ENCODE measurements at regions of chr11 and their contacts with region 1.

Region 1: DNA sequence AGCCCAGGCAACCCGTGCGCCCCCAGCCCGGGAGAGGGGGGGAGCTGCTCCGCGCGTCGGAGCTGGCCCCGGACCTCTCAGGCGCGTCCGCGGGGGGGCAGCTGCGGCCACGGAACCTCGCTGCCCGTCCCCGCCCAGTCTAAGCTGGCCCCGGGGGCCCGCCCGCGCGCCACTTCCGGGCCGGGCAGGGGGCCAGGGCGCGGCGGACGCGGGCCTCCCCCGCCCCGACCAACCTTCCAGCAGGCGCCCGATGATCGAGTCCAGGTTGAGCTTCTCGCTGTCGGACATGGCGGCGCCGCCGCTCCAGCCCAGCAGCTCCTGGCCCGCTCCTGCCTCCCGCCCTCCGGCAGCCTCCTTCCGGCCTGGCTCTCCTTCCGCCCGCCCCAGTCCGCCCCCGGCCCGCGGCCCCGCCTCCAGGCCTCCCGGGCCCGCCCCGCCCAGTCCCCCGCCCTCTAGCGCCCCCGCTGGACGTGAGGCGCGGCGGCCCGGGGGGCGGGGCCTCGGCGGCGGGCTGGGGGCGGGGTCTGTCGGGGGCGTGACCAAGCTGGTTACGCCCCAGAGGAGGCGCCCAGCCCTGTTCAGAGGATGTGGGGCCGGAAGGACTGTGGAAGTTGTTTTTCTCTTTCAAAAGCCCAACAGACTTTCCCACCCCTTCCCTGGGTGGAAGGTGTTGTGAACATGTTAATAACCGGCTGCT is at the start of gene PPP1CA:
- DNase-seq: peak; percentile 64 to 93
- H3K4me3 ChIP-seq: peak within 1 kb of the TSS; percentile 44 to 98 (median 73)
- H3K27ac ChIP-seq: peak within 1 kb of the TSS; percentile 79; the same call in 1 of the 2 replicates
- H3K4me1 ChIP-seq: peaks cover 0 to 8% (median 4%) of the 10 kb centered on the region in 4 experiments; a peak in 5 of 7 replicates
- H3K27me3 ChIP-seq: no peaks in the 10 kb centered on the region
- CTCF ChIP-seq: peak in 1 of 3 experiments; percentile 37; a peak in 1 of 4 replicates
- EP300 ChIP-seq: no peak
- POLR2A ChIP-seq: peak in 1 of 2 experiments; percentile 72; a peak in 1 of 3 replicates
- RAD21 ChIP-seq: 0 out of 4 replicates have a peak, but pooled peaks of 1 of the 2 experiments have one; percentile 0
- total RNA-seq, gene PPP1CA: 198 and 210 TPM in 2 replicates

Region 2: DNA sequence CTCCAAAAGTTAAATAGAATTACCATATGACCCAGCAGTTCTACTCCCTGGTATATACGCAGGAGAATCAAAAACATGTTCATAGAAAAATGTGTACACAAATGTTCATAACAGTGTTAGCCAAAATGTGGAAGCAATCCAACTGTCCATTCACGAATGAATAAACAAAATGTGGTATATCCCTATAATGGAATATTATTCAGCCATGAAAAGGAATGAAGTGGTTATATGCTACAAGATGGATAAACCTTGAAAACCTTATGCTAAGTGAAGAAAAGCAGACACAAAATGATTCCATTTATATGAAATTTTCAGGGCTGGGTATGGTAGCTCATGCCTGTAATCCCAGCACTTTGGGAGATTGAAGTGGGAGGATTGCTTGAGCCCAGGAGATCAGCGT is 64.4 kb before region 1 on chr11:
- CTCF ChIA-PET with region 1: no interaction called
- POLR2A ChIA-PET with region 1: no interaction called
- DNase-seq: no peak
- H3K4me3 ChIP-seq: no peak overlapping the region
- H3K27ac ChIP-seq: no peak overlapping the region
- H3K4me1 ChIP-seq: no peaks in the 10 kb centered on the region
- H3K27me3 ChIP-seq: no peaks in the 10 kb centered on the region
- CTCF ChIP-seq: no peak
- EP300 ChIP-seq: no peak
- POLR2A ChIP-seq: no peak
- RAD21 ChIP-seq: no peak

Region 3: DNA sequence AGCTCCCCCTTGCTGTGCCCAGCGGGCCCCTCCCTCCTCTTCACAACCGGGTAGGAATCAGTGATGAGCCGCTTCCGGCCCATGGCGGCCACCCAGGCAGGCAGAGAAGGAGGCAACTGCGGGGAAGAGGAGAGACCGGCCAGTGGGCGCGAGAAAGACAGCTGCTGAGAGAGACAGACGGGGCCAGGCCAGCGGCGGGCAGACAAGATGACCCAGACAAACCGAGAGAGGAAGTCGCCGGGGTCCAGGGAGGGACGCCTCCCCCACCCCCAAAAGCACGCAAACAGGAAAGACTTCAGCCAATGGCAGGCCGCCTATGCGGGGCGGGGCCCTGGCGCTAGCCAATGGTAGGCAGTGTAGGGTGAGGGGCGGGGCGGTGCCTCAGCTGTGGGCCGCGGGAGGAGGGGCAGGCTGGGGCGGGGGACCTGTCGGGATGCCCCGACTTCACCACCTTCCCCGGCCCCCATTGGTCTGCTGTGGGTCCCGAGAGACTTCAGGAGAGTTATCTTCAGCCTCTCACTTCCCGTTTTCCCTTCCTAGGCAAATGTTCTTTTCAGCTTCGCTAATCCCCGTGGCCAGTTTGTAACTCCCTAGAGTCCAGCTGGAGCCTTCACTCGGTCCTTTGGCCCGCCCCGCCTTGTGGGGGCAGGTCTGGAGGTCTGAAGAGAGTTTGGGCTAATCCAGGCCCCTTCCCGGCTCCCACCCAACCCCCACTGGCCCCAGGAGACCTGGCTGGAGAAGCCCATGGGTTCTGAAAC is 48.1 kb before region 1 on chr11 and contains the start of gene POLD4:
- CTCF ChIA-PET with region 1: interaction called, 1,305 read pairs
- POLR2A ChIA-PET with region 1: interaction called, 6 read pairs
- DNase-seq: peak; percentile 79 to 99
- H3K4me3 ChIP-seq: peak within 1 kb of the TSS; percentile 57 to 78 (median 73)
- H3K27ac ChIP-seq: peak within 1 kb of the TSS; percentile 72; the same call in 1 of the 2 replicates
- H3K4me1 ChIP-seq: peaks cover 0 to 18% (median 15%) of the 10 kb centered on the region in 4 experiments; a peak in 6 of 7 replicates
- H3K27me3 ChIP-seq: no peaks in the 10 kb centered on the region; a peak in 1 of 7 replicates
- CTCF ChIP-seq: no peak
- EP300 ChIP-seq: no peak
- POLR2A ChIP-seq: peak in 1 of 2 experiments; percentile 64; a peak in 2 of 3 replicates
- RAD21 ChIP-seq: no peak
- total RNA-seq, gene POLD4: 18.5 and 21.2 TPM in 2 replicates

Region 4: DNA sequence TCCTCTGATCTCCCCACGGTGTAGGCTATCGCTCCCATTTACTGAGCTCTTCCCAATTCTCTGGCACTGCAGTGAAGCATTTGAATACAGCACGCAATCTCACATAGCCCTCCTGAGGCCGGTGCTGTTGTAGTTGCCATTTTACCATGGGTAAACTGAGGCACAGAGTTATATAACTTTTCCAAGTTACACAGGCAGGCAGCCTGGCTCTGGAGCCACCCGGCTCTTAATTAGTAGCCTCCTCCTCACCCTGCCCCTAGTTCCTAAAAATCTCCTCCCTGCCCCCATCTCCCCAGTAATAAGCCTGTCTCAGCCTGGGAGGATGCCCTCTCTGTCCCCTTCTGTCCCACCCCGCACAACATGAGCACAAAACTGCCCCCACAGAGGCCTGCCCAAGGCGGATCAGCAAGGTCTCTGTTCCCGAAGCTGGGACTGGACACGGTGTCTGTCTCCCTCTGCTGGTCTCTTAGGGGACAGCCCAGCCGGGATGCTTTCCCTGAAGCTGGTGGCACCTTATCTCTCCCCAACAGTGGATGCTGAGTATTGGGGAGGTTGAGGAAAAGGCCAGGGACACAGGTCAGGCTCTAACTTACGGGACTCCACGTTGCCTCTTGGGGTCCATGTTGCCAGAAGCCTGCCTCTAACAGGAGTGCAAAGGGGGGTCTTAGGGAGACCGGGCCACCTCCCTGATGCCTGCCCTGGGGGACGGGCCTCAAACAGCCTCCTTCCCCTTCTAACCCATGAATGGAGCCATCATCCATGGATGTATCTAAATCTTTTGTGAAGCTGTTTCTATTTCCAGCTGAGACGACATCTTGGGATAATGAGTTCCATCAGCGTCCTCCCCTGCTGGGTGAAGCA is 19.1 kb before region 1 on chr11:
- CTCF ChIA-PET with region 1: interaction called, 15 read pairs
- POLR2A ChIA-PET with region 1: interaction called, 6 read pairs
- DNase-seq: peak in 1 of 2 experiments; percentile 94
- H3K4me3 ChIP-seq: no peak overlapping the region
- H3K27ac ChIP-seq: no peak overlapping the region
- H3K4me1 ChIP-seq: peaks cover 0 to 11% (median 5%) of the 10 kb centered on the region in 4 experiments; a peak in 5 of 7 replicates
- H3K27me3 ChIP-seq: peaks cover 0 to 16% (median 10%) of the 10 kb centered on the region in 4 experiments; a peak in 5 of 7 replicates
- CTCF ChIP-seq: peak; percentile 95 to 99 (median 98)
- EP300 ChIP-seq: no peak
- POLR2A ChIP-seq: no peak
- RAD21 ChIP-seq: peak; percentile 99 to 100

Region 5: GRCh38 chr11:67415501-67416304 is 14.1 kb after region 1 on chr11 and contains the start of gene CARNS1:
- CTCF ChIA-PET with region 1: interaction called, 13 read pairs
- POLR2A ChIA-PET with region 1: interaction called, 11 read pairs
- DNase-seq: no peak
- H3K4me3 ChIP-seq: peak within 1 kb of the TSS; percentile 39 to 67 (median 45)
- H3K27ac ChIP-seq: no peak within 1 kb of the TSS
- H3K4me1 ChIP-seq: peaks cover 4 to 17% (median 11%) of the 10 kb centered on the region in 4 experiments
- H3K27me3 ChIP-seq: peaks cover 0 to 23% (median 10%) of the 10 kb centered on the region in 4 experiments; a peak in 5 of 7 replicates
- CTCF ChIP-seq: no peak
- EP300 ChIP-seq: no peak
- POLR2A ChIP-seq: no peak
- RAD21 ChIP-seq: no peak
- total RNA-seq, gene CARNS1: 0.61 and 1.1 TPM in 2 replicates

Region 6: DNA sequence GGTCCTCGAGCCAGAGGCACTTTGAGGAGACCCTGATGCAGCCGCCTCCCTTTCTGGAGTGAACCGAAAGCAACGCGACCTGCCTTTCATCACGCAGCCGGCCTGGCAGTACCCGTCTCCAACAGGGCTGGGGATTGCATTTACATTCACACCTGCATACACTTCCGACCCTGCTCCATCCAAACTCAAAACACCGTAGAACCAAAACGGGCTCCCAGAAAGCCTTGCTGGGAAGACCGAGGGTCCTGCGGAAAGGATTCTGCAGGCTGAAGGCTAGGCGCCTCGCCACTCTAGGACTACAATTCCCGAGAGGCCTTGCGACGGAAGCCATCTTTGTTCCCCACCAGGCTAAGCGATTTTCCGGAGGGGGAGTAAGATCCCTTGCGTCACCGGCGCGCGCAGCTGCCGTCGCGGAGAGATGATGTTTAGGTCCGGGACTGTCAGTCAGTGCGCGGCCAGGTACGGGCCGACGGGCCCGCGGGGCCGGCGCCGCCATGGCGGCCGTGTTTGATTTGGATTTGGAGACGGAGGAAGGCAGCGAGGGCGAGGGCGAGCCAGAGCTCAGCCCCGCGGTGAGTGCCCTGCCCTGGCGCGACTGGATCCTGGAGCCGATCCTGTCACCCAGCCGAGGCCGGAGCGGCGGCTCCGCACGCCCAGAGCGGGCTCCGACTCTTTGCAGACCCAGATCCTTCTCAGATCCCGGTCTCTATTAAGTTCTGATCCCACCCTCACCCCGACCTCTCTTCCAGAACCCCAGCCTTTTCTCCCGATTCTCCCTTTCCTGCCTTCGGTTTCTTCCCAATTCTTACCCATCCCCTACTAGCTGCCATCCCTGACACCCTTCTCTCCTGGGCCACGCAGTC is 26.6 kb after region 1 on chr11 and contains the start of gene RPS6KB2:
- CTCF ChIA-PET with region 1: interaction called, 10 read pairs
- POLR2A ChIA-PET with region 1: interaction called, 8 read pairs
- DNase-seq: peak; percentile 91 to 100
- H3K4me3 ChIP-seq: peak within 1 kb of the TSS; percentile 66 to 98 (median 90)
- H3K27ac ChIP-seq: peak within 1 kb of the TSS; percentile 33
- H3K4me1 ChIP-seq: peaks cover 0 to 12% (median 4%) of the 10 kb centered on the region in 4 experiments; a peak in 6 of 7 replicates
- H3K27me3 ChIP-seq: no peaks in the 10 kb centered on the region
- CTCF ChIP-seq: no peak
- EP300 ChIP-seq: 0 out of 3 replicates have a peak, but pooled peaks of 1 of the 2 experiments have one; percentile 49
- POLR2A ChIP-seq: peak in 1 of 2 experiments; percentile 91; a peak in 2 of 3 replicates
- RAD21 ChIP-seq: no peak
- total RNA-seq, gene RPS6KB2: 41.0 and 43.9 TPM in 2 replicates

Region 7: GRCh38 chr11:67468835-67469811 is 67.5 kb after region 1 on chr11 and contains the start of gene TMEM134:
- CTCF ChIA-PET with region 1: interaction called, 15 read pairs
- POLR2A ChIA-PET with region 1: interaction called, 10 read pairs
- DNase-seq: peak; percentile 70 to 93
- H3K4me3 ChIP-seq: peak within 1 kb of the TSS; percentile 55 to 90 (median 76)
- H3K27ac ChIP-seq: peak within 1 kb of the TSS; percentile 58; the same call in 1 of the 2 replicates
- H3K4me1 ChIP-seq: peaks cover under 1 to 12% (median 3%) of the 10 kb centered on the region in 4 experiments; a peak in 6 of 7 replicates
- H3K27me3 ChIP-seq: no peaks in the 10 kb centered on the region
- CTCF ChIP-seq: peak; percentile 45 to 63 (median 59)
- EP300 ChIP-seq: no peak
- POLR2A ChIP-seq: peak; percentile 57 to 84
- RAD21 ChIP-seq: peak; percentile 57 to 72
- total RNA-seq, gene TMEM134: 32.4 and 33.5 TPM in 2 replicates

Region 8: GRCh38 chr11:67545280-67545679 is 143.6 kb after region 1 on chr11:
- CTCF ChIA-PET with region 1: no interaction called
- POLR2A ChIA-PET with region 1: no interaction called
- DNase-seq: no peak
- H3K4me3 ChIP-seq: no peak overlapping the region
- H3K27ac ChIP-seq: no peak overlapping the region
- H3K4me1 ChIP-seq: peaks cover 0 to 5% (median 0%) of the 10 kb centered on the region in 4 experiments; a peak in 2 of 7 replicates
- H3K27me3 ChIP-seq: no peaks in the 10 kb centered on the region; a peak in 1 of 7 replicates
- CTCF ChIP-seq: peak in 2 of 3 experiments; percentile 29 to 44; a peak in 2 of 4 replicates
- EP300 ChIP-seq: no peak
- POLR2A ChIP-seq: no peak
- RAD21 ChIP-seq: no peak

Region 9: GRCh38 chr11:67563354-67564114 is 161.9 kb after region 1 on chr11:
- CTCF ChIA-PET with region 1: no interaction called
- POLR2A ChIA-PET with region 1: no interaction called
- DNase-seq: no peak
- H3K4me3 ChIP-seq: no peak overlapping the region
- H3K27ac ChIP-seq: no peak overlapping the region
- H3K4me1 ChIP-seq: peaks cover 0 to 4% (median 0%) of the 10 kb centered on the region in 4 experiments; a peak in 1 of 7 replicates
- H3K27me3 ChIP-seq: no peaks in the 10 kb centered on the region; a peak in 1 of 7 replicates
- CTCF ChIP-seq: no peak
- EP300 ChIP-seq: no peak
- POLR2A ChIP-seq: no peak
- RAD21 ChIP-seq: no peak